ENCODE measurements at regions of chr18 and their contacts with region 1.

Region 1: DNA sequence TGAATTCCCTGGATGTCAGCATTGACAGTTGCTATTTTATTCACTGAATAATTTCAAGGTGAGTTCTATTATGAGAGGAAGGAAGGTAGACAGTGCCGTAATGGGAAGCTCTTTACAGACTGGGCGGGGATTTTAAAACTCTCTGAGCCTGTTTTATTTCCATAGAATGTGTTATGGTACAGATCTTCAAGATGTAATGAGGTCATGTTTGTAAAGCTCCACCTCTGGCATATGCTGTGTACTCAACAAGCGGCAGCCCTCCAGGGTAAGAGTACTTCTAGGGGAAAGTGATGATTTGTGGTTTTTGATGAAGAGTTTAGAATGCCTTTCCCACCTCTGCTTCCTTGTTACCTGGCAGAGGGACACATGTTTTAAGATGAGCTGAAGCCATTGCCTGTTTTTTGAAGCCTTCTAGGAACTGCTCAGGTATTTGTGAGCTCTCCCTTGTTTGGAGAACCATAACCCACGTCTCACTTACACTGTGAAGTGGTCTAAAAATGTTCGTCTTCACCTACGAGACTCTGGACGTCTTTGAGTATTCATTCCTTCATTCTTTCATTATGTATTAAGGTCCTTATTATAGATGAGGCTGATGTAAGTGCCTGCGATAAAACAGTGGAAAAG is 251.2 kb downstream of the PTGR3 start:
- H3K4me3 Mint-ChIP-seq: no peak overlapping the region
- H3K27ac Mint-ChIP-seq: no peak overlapping the region
- H3K4me1 Mint-ChIP-seq: peaks cover 11% of the 10 kb centered on the region
- H3K27me3 Mint-ChIP-seq: no peaks in the 10 kb centered on the region

Region 2: DNA sequence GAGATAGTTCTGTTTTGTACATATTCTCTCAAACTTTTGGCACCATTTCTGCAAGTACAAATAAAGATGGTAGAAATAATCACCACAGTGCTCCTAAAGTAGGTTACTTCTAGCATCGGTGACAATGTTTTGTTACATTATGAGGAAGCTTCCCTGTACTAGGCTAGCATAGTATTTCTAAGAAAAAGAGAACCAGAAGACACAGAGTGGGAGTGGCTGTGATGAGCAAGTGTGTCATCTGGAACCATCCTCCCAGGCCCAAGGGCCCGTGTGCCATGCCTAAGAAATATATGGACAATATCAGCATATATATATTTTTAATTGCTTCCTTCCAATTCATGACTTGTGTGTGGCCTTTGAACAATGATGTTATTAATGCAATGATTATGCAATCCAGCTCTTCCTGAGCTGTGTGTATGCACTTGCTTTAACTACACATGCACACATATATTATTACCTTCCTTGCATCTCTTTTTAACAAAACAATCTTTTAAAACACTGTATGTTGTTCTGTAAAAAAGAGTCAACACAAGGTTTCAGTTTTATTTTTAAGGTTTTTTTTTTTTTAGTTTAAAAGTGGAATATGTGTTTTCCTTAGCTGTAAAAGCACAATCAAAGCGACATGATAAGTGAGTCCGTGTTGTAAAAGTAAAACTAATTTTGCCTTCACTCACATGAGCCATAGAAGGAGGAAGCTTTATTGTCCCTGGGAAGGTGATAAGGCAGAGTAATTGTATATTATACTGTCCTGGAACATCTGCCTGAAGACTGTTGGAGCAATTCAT is 56.2 kb before region 1 on chr18:
- intact Hi-C with region 1: loop called (anchors 5 kb)
- H3K4me3 Mint-ChIP-seq: no peak overlapping the region
- H3K27ac Mint-ChIP-seq: peak overlapping the region; percentile 83
- H3K4me1 Mint-ChIP-seq: peaks cover 51% of the 10 kb centered on the region
- H3K27me3 Mint-ChIP-seq: no peaks in the 10 kb centered on the region

Region 3: DNA sequence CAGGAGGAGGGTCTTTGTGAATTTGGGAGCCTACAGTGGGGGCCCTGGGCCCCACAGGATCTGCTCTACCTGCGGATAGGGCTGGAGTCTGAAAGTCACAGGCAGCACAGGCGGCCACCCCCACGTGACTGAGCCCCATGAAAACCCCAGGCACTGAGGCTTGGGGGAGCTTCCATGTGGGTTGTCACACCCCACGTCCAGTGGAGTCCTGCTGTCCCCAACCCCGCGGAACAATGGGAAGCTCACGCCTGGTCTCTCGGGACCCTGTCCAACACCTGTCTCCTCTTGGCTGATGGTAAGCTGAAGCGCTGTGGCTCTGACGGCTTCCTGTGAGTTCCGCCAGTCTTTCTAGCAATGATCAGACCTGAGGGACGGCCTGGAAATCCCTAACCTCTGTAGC is 165.4 kb after region 1 on chr18:
- intact Hi-C with region 1: no loop called
- H3K4me3 Mint-ChIP-seq: no peak overlapping the region
- H3K27ac Mint-ChIP-seq: no peak overlapping the region
- H3K4me1 Mint-ChIP-seq: no peaks in the 10 kb centered on the region
- H3K27me3 Mint-ChIP-seq: peaks cover 6% of the 10 kb centered on the region